ENCODE measurements at regions of chr11 and their contacts with region 1.

Region 1: GRCh38 chr11:95254131-95254704 is 23.2 kb upstream of the SESN3 start:
- DNase-seq: peak; percentile 96
- H3K4me3 ChIP-seq: peak overlapping the region; percentile 45
- H3K27ac ChIP-seq: peak overlapping the region; percentile 85
- H3K4me1 ChIP-seq: peaks cover 66% of the 10 kb centered on the region
- CTCF ChIP-seq: no peak

Region 2: GRCh38 chr11:95165638-95166037 is 88.6 kb before region 1 on chr11:
- CTCF ChIA-PET with region 1: no interaction called
- POLR2A ChIA-PET with region 1: no interaction called
- intact Hi-C with region 1: no loop called
- DNase-seq: no peak
- H3K4me3 ChIP-seq: no peak overlapping the region
- H3K27ac ChIP-seq: no peak overlapping the region
- H3K4me1 ChIP-seq: no peaks in the 10 kb centered on the region
- CTCF ChIP-seq: no peak

Region 3: GRCh38 chr11:95241681-95242081 is 12.5 kb before region 1 on chr11:
- CTCF ChIA-PET with region 1: interaction called, 3 read pairs
- POLR2A ChIA-PET with region 1: interaction called, 51 read pairs
- intact Hi-C with region 1: no loop called
- DNase-seq: no peak
- H3K4me3 ChIP-seq: no peak overlapping the region
- H3K27ac ChIP-seq: no peak overlapping the region
- H3K4me1 ChIP-seq: no peaks in the 10 kb centered on the region
- CTCF ChIP-seq: no peak

Region 4: GRCh38 chr11:95266751-95267374 is 12.6 kb after region 1 on chr11:
- CTCF ChIA-PET with region 1: interaction called, 3 read pairs
- POLR2A ChIA-PET with region 1: interaction called, 67 read pairs
- intact Hi-C with region 1: no loop called
- DNase-seq: no peak
- H3K4me3 ChIP-seq: no peak overlapping the region
- H3K27ac ChIP-seq: no peak overlapping the region
- H3K4me1 ChIP-seq: peaks cover 28% of the 10 kb centered on the region
- CTCF ChIP-seq: no peak

Region 5: GRCh38 chr11:95289378-95290101 is 35.3 kb after region 1 on chr11:
- CTCF ChIA-PET with region 1: no interaction called
- POLR2A ChIA-PET with region 1: interaction called, 15 read pairs
- intact Hi-C with region 1: no loop called
- DNase-seq: no peak
- H3K4me3 ChIP-seq: no peak overlapping the region
- H3K27ac ChIP-seq: no peak overlapping the region
- H3K4me1 ChIP-seq: no peaks in the 10 kb centered on the region
- CTCF ChIP-seq: no peak

Region 6: DNA sequence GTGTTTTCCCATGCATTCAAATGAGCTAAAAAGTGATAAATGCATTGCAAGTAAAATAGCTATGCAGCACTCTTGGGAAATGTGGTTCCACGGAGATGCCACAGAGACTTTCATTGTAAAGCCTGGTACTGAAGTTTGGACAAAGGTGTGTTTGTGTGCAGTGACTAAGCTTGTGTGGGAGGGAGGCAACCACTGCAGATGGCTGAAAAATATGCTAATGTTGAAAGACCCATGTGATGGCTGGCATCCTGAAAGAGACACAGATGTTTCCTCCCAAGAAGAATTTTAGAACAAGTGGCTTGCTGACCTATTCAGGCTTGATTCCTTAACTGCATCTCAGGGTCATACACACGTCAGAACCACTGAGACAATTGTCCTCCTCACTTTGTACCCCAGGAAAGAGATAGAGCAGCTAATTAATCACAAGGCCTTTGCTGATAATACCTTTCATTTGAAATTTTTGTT is 461.6 kb after region 1 on chr11:
- CTCF ChIA-PET with region 1: no interaction called
- POLR2A ChIA-PET with region 1: interaction called, 11 read pairs
- intact Hi-C with region 1: no loop called
- DNase-seq: peak; percentile 85
- H3K4me3 ChIP-seq: peak overlapping the region; percentile 49
- H3K27ac ChIP-seq: peak overlapping the region; percentile 78
- H3K4me1 ChIP-seq: peaks cover 59% of the 10 kb centered on the region
- CTCF ChIP-seq: no peak

Measured in OCI-LY7 (cell line).